ENCODE measurements at regions of chr5 and their contacts with region 1.

Region 1: GRCh38 chr5:142748568-142749249 is 21.5 kb upstream of the ARHGAP26 start:
- DNase-seq: peak; percentile 76
- H3K4me3 Mint-ChIP-seq: no peak overlapping the region
- H3K27ac Mint-ChIP-seq: no peak overlapping the region
- H3K4me1 Mint-ChIP-seq: peaks cover 13% of the 10 kb centered on the region
- H3K27me3 Mint-ChIP-seq: no peaks in the 10 kb centered on the region

Region 2: GRCh38 chr5:142864725-142865260 is 116.1 kb after region 1 on chr5:
- CTCF ChIA-PET with region 1: interaction called, 105 read pairs
- intact Hi-C with region 1: loop called (anchors 1 kb)
- DNase-seq: no peak
- H3K4me3 Mint-ChIP-seq: no peak overlapping the region
- H3K27ac Mint-ChIP-seq: peak overlapping the region; percentile 89
- H3K4me1 Mint-ChIP-seq: peaks cover 30% of the 10 kb centered on the region
- H3K27me3 Mint-ChIP-seq: no peaks in the 10 kb centered on the region

Region 3: DNA sequence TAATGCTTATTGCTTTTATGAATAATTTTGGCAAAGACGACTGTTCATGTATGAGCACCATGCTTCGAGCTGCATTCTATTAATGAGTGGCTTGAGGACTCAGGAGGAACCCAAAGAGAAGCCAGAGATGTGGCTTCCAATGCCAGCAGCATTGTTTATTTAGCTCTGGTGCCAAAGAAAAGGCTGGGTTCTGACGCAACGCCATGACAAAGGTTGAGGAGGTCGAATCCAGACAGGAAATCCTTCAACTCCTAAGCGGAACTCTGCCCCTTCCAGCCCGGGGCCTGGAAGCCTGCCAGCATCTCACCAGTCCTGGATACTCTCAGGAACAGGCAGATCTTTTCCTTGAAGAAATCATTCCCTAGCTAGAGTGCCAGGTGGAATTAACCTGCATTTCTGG is 125.8 kb after region 1 on chr5:
- CTCF ChIA-PET with region 1: interaction called, 163 read pairs
- intact Hi-C with region 1: no loop called
- DNase-seq: no peak
- H3K4me3 Mint-ChIP-seq: no peak overlapping the region
- H3K27ac Mint-ChIP-seq: no peak overlapping the region
- H3K4me1 Mint-ChIP-seq: peaks cover 3% of the 10 kb centered on the region
- H3K27me3 Mint-ChIP-seq: no peaks in the 10 kb centered on the region

Measured in activated naive CD4-positive, alpha-beta T cell treated with anti-CD3 and anti-CD28 coated beads for 36 hours (primary cell).